Colonic mucosa (tissue), 4 donors: ENCODE measurements at regions of chr20 and their contacts with region 1.

Region 1: GRCh38 chr20:47785854-47786764 is 828 bp upstream of the SULF2 start:
- DNase-seq: peak; percentile 75
- H3K4me3 ChIP-seq: peak overlapping the region; percentile 57
- H3K27ac ChIP-seq: peak overlapping the region; percentile 82
- H3K4me1 ChIP-seq: no peaks in the 10 kb centered on the region
- H3K27me3 ChIP-seq: no peaks in the 10 kb centered on the region
- CTCF ChIP-seq: peak; percentile 47

Region 2: GRCh38 chr20:47438577-47439381 is 347.3 kb before region 1 on chr20:
- intact Hi-C with region 1: no loop called
- DNase-seq: no peak
- H3K4me3 ChIP-seq: no peak overlapping the region
- H3K27ac ChIP-seq: no peak overlapping the region
- H3K4me1 ChIP-seq: no peaks in the 10 kb centered on the region
- H3K27me3 ChIP-seq: no peaks in the 10 kb centered on the region
- CTCF ChIP-seq: no peak

Region 3: DNA sequence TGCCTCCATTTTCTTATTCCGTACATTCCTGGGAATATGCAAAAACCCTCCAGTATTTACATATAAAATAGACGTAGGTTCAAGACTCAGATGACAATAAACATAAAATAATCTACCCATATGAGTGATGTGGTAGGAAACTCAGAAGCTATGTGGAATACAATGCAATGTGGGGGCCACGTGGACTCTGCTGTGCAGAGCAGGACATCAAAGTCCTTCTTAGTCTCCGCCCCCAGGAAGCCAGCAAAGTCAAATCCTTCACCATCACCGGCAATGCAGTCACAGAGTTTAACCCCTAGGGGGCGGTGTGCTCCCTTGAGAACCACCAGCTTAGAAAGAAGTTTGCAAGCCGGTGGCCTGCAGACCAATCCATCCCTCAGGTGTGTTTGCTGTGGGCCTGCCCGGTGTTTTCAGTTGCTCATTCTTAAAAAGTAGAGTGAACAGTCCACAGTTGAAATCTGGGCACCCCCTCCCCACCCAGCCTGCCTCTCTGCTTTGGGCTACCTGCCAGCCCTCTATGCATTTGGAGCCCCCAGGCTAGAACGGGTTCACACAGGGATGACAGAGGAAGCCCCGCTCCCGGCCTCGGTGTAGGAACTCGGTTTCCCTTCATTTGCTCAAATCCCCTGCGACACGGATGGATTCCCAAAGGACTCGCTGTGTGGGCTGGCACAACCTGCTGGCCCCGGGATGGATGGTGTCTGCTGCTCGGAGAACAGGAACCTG is 60.7 kb before region 1 on chr20:
- intact Hi-C with region 1: loop called (anchors 5 kb)
- DNase-seq: peak; percentile 82
- H3K4me3 ChIP-seq: no peak overlapping the region
- H3K27ac ChIP-seq: no peak overlapping the region
- H3K4me1 ChIP-seq: no peaks in the 10 kb centered on the region
- H3K27me3 ChIP-seq: no peaks in the 10 kb centered on the region
- CTCF ChIP-seq: peak; percentile 97

Region 4: DNA sequence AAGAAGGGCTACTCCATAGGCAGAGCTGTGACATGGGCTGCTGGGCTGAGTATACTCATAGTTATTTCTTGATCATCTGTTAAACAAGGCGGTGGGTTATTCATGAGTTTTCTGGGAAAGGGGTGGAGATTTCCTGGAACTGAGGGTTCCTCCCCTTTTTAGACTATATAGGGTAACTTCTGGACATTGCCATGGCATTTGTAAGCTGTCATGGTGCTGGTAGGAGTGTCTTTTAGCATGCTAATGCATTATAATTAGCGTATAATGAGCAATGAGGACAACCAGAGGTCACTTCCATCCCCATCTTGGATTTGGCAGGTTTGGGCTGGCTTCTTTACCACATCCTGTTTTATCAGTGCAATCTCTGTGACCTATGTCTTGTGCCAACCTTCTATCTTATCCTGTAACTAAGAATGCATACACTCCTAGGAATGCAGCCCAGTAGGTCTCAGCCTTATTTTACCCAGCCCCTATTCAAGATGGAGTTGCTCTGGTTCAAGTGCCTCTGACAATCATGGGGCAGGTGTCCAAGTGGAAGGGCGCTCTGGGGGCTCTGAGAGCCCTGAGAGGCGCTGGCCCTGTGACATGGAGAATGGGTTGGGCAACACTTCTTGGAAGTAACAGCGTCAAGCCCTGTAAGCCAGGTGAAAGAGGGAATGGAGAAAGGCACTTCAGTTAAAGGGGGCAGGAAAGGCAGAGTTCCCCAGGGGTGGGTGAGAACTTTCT is 353.3 kb after region 1 on chr20:
- intact Hi-C with region 1: no loop called
- DNase-seq: no peak
- H3K4me3 ChIP-seq: no peak overlapping the region
- H3K27ac ChIP-seq: no peak overlapping the region
- H3K4me1 ChIP-seq: no peaks in the 10 kb centered on the region
- H3K27me3 ChIP-seq: no peaks in the 10 kb centered on the region
- CTCF ChIP-seq: no peak